PC-9 (cell line): ENCODE measurements at regions of chr1 and their contacts with region 1.

Region 1: GRCh38 chr1:239976130-239976968 is 115.3 kb upstream of the FMN2 start:
- DNase-seq: peak; percentile 33 to 44
- H3K4me3 ChIP-seq: no peak overlapping the region
- H3K27ac ChIP-seq: no peak overlapping the region
- H3K4me1 ChIP-seq: no peaks in the 10 kb centered on the region
- H3K27me3 ChIP-seq: peaks cover 30% of the 10 kb centered on the region
- CTCF ChIP-seq: peak; percentile 91

Region 2: GRCh38 chr1:238239343-238239742 is 1737.0 kb before region 1 on chr1:
- CTCF ChIA-PET with region 1: no interaction called
- POLR2A ChIA-PET with region 1: no interaction called
- intact Hi-C with region 1: loop called (anchors 2 kb)
- DNase-seq: no peak
- H3K4me3 ChIP-seq: no peak overlapping the region
- H3K27ac ChIP-seq: no peak overlapping the region
- H3K4me1 ChIP-seq: no peaks in the 10 kb centered on the region
- H3K27me3 ChIP-seq: no peaks in the 10 kb centered on the region
- CTCF ChIP-seq: no peak

Region 3: GRCh38 chr1:238252033-238252802 is 1724.1 kb before region 1 on chr1:
- CTCF ChIA-PET with region 1: no interaction called
- POLR2A ChIA-PET with region 1: no interaction called
- intact Hi-C with region 1: loop called (anchors 5 kb)
- DNase-seq: peak in 1 of 2 experiments; percentile 26
- H3K4me3 ChIP-seq: no peak overlapping the region
- H3K27ac ChIP-seq: no peak overlapping the region
- H3K4me1 ChIP-seq: no peaks in the 10 kb centered on the region
- H3K27me3 ChIP-seq: no peaks in the 10 kb centered on the region
- CTCF ChIP-seq: peak; percentile 71

Region 4: DNA sequence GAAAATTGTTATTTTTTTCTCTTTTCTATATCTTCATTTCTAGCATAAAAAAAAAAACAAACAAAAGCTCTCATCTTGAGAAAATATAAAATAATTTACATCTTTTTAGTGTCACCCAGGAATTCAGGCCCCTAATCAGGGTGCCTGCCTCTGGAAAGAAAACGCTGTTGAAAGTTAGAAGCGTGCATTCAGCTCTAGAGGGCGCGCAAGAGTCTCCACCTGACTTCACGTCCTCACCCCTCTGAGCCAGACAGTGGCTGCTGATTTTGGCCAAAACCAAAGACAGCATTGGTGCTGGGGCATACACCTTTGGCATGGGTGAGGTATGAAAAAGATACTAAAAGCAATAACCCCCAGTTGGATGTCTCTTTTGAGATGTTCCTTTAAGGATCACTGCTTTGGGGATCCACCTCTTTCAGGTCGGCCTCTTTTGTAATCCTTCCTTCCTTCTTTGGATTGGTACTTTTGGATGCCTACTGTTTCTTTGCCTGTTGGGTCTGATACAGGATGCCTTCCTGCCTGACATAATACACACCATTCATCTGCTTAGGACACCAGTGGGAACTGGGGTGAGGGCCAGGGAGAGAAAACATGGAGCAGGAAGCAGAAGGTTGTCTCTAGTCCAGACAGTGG is 667.5 kb before region 1 on chr1:
- CTCF ChIA-PET with region 1: no interaction called
- POLR2A ChIA-PET with region 1: no interaction called
- intact Hi-C with region 1: loop called (anchors 2 kb)
- DNase-seq: peak in 1 of 2 experiments; percentile 28
- H3K4me3 ChIP-seq: no peak overlapping the region
- H3K27ac ChIP-seq: no peak overlapping the region
- H3K4me1 ChIP-seq: no peaks in the 10 kb centered on the region
- H3K27me3 ChIP-seq: no peaks in the 10 kb centered on the region
- CTCF ChIP-seq: peak; percentile 67

Region 5: DNA sequence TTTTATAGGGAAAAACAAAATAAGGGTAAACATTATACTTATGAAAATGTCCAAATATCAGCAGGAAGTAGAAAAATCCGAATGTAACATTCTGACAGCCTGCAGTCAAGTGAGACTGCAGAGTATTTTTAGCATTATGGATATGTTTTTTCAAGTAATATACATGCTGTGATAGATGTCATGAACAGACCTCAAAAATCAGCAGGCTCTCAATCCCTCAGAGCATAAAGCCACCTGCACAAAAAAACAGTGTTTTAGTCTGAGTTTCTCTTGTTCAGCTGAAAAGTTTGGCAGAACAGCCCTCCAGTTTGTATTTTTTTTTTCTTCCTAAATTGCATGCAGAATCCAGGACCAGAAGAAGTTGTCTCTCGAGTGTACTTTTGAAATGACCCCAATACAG is 103.7 kb before region 1 on chr1:
- CTCF ChIA-PET with region 1: no interaction called
- POLR2A ChIA-PET with region 1: no interaction called
- intact Hi-C with region 1: no loop called
- DNase-seq: no peak
- H3K4me3 ChIP-seq: no peak overlapping the region
- H3K27ac ChIP-seq: no peak overlapping the region
- H3K4me1 ChIP-seq: no peaks in the 10 kb centered on the region; the same call in 1 of the 2 replicates
- H3K27me3 ChIP-seq: no peaks in the 10 kb centered on the region
- CTCF ChIP-seq: no peak

Region 6: GRCh38 chr1:239951511-239952140 is 24.7 kb before region 1 on chr1:
- CTCF ChIA-PET with region 1: no interaction called
- POLR2A ChIA-PET with region 1: no interaction called
- intact Hi-C with region 1: loop called (anchors 1 kb)
- DNase-seq: peak; percentile 28 to 48
- H3K4me3 ChIP-seq: no peak overlapping the region
- H3K27ac ChIP-seq: no peak overlapping the region
- H3K4me1 ChIP-seq: no peaks in the 10 kb centered on the region
- H3K27me3 ChIP-seq: peaks cover 28% of the 10 kb centered on the region
- CTCF ChIP-seq: peak; percentile 80

Region 7: GRCh38 chr1:239997515-239998311 is 21.4 kb after region 1 on chr1:
- CTCF ChIA-PET with region 1: no interaction called
- POLR2A ChIA-PET with region 1: no interaction called
- intact Hi-C with region 1: no loop called
- DNase-seq: no peak
- H3K4me3 ChIP-seq: no peak overlapping the region
- H3K27ac ChIP-seq: no peak overlapping the region
- H3K4me1 ChIP-seq: no peaks in the 10 kb centered on the region
- H3K27me3 ChIP-seq: peaks cover 15% of the 10 kb centered on the region
- CTCF ChIP-seq: no peak